Common myeloid progenitor, CD34-positive (primary cell): ENCODE measurements at regions of chr19 and their contacts with region 1.

Region 1: DNA sequence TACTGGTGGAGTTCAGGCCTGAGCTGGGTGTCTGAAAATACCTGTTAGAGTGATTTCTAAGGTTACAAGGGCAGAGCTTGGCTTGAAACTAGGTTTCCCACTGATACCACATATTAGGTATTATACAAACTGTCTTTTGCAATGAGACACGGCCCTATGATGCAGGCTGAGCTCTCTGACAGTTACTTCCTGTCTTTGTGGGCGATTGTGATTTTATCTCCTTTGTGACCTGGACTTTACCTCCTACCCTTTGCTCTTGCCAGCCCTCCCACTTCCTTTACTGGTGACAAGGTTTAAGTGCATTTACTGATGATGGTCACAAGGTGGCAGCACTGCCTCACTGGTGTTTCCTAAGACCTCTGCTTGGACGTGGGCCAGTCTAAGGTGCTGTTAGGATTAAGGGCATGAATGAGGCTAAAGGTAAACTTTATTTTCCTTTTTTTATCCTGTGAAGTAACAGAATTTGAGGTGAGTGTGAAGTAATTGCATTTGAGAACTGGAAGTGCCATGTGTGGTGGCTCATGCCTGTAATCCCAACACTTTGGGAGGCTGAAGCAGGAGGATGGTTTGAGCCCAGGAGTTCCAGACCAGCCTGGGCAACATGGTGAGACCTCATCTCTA is 7.7 kb upstream of the CXCL17 start:
- DNase-seq: peak; percentile 89 to 95 (median 91)
- H3K4me3 ChIP-seq: no peak overlapping the region
- H3K27ac ChIP-seq: no peak overlapping the region
- H3K4me1 ChIP-seq: peaks cover 0 to 26% (median 18%) of the 10 kb centered on the region in 4 experiments
- H3K27me3 ChIP-seq: no peaks in the 10 kb centered on the region

Region 2: DNA sequence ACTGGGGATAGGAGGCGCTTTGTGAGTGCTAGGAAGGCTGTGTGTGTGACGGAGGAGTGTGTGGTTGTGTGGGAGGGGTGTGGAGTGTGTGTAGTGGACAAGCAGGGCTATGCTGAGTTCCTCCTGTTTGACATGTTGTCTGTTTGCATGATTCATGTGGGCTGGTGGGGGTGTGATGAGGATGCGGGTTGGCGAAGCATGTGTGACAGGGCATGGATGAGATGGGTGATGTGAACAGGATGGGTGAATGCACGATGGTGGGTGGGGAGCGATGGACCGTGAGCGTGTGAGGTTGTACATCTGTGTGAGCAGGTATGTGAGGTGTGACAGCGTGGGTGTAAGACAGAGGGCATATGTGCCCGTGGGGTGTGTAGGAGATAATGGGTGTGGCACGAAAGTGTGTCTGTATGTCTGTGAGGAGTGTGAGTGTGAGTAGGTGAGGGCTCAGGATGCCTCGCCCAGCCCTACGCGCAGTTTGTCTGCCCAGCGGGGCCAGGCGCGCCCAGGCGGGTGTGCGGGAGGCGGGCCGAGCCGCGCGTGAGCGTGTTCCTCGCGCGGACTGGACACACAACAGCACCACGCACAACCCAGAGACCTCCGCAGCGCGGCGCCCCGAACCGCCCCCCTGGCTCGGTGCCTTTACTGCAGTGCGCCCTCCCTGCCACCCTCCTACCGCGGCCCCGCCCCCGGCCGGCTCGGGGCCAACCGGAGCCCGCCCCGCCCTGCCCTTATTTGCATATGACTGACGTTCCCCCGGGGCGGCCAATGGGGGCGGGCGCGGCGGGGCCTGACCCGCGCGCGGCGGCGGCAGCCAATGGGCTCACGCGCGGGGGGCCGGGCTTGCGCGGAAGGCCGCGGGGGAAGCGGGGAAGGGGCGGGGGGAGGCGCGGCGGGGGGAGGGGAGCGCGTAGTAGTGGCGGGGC is 167.0 kb before region 1 on chr19:
- CTCF ChIA-PET with region 1: no interaction called
- POLR2A ChIA-PET with region 1: no interaction called
- DNase-seq: peak; percentile 93 to 97 (median 96)
- H3K4me3 ChIP-seq: peak overlapping the region in 6 of 7 experiments; percentile 2 to 91 (median 64)
- H3K27ac ChIP-seq: peak overlapping the region; percentile 4 to 73
- H3K4me1 ChIP-seq: peaks cover 9 to 73% (median 63%) of the 10 kb centered on the region in 4 experiments
- H3K27me3 ChIP-seq: no peaks in the 10 kb centered on the region

Region 3: GRCh38 chr19:42396381-42397262 is 53.8 kb before region 1 on chr19:
- CTCF ChIA-PET with region 1: no interaction called
- POLR2A ChIA-PET with region 1: no interaction called
- DNase-seq: peak; percentile 97 to 99 (median 99)
- H3K4me3 ChIP-seq: peak overlapping the region; percentile 45 to 97 (median 85)
- H3K27ac ChIP-seq: peak overlapping the region; percentile 78 to 88
- H3K4me1 ChIP-seq: peaks cover 0 to 30% (median 25%) of the 10 kb centered on the region in 4 experiments
- H3K27me3 ChIP-seq: peaks cover 0 to 4% (median 0%) of the 10 kb centered on the region in 5 experiments

Region 4: GRCh38 chr19:42424712-42425131 is 25.7 kb before region 1 on chr19:
- CTCF ChIA-PET with region 1: no interaction called
- POLR2A ChIA-PET with region 1: no interaction called
- DNase-seq: no peak
- H3K4me3 ChIP-seq: no peak overlapping the region
- H3K27ac ChIP-seq: no peak overlapping the region
- H3K4me1 ChIP-seq: peaks cover 7 to 34% (median 25%) of the 10 kb centered on the region in 4 experiments
- H3K27me3 ChIP-seq: peaks cover 0 to 7% (median 0%) of the 10 kb centered on the region in 5 experiments

Region 5: DNA sequence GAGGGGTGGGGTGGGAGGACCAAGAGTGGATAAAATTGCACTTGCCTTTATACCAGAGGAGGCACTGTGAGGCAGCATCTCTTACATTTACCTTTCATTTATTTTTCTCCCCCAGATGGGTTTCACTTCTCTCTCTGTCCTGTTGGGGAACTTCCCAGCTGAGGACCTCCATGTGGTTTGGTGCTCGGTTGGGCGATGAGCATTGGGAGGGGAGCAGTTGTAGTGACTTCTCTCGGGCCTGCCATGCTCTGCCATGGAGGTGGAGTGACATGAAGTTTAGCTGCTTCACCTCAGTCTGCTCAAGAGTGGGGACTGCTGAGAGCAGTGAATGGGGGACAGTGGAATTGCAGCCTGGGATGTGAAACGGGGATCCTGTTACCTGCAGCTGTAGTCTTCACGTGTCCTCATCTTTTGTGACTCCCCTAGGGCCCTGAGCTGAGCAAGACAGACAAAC is 15.4 kb after region 1 on chr19:
- CTCF ChIA-PET with region 1: interaction called, 12 read pairs
- POLR2A ChIA-PET with region 1: interaction called, 3 read pairs
- DNase-seq: peak in 1 of 3 donors; percentile 25
- H3K4me3 ChIP-seq: no peak overlapping the region
- H3K27ac ChIP-seq: no peak overlapping the region
- H3K4me1 ChIP-seq: peaks cover 4 to 25% (median 18%) of the 10 kb centered on the region in 4 experiments
- H3K27me3 ChIP-seq: no peaks in the 10 kb centered on the region

Region 6: GRCh38 chr19:42563352-42564210 is 113.2 kb after region 1 on chr19:
- CTCF ChIA-PET with region 1: no interaction called
- POLR2A ChIA-PET with region 1: no interaction called
- DNase-seq: peak; percentile 45 to 58 (median 52)
- H3K4me3 ChIP-seq: no peak overlapping the region
- H3K27ac ChIP-seq: no peak overlapping the region
- H3K4me1 ChIP-seq: peaks cover 6 to 24% (median 13%) of the 10 kb centered on the region in 4 experiments
- H3K27me3 ChIP-seq: peaks cover 0 to 3% (median 0%) of the 10 kb centered on the region in 5 experiments